Naive thymus-derived CD8-positive, alpha-beta T cell (primary cell): ENCODE measurements at regions of chr15 and their contacts with region 1.

Region 1: DNA sequence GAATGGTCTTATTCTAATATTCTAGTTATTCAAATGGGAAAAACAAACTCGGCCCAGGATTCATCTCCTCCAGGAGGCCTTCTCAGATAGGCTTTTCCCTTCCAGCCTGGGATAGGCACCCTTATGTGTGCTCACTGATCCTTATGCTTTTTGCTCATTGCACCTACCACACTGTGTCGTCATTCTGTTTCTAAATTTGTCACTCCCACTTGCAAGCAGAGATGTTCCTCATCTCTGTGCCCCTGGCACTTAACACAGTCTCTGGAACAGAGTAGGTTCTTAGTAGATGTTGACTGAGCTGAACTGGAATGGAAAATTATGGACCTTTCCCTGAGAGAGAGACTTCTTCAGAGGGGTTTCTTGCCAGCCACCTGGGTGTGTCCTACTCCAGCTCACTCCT is 18.7 kb upstream of the SPG11 start:
- DNase-seq: no peak
- ATAC-seq: no peak
- H3K4me3 Mint-ChIP-seq: peak overlapping the region; percentile 58 to 83 (median 72)
- H3K27ac Mint-ChIP-seq: peak overlapping the region; percentile 92 to 99 (median 96)
- H3K4me1 Mint-ChIP-seq: peaks cover 44 to 95% (median 93%) of the 10 kb centered on the region in 4 donors
- H3K27me3 Mint-ChIP-seq: no peaks in the 10 kb centered on the region

Region 2: GRCh38 chr15:44633603-44634002 is 48.6 kb before region 1 on chr15:
- POLR2A ChIA-PET with region 1: no interaction called
- DNase-seq: no peak
- ATAC-seq: no peak
- H3K4me3 Mint-ChIP-seq: peak overlapping the region in 2 of 10 donors; percentile 50 to 58
- H3K27ac Mint-ChIP-seq: peak overlapping the region in 4 of 10 donors; percentile 47 to 77 (median 50)
- H3K4me1 Mint-ChIP-seq: peaks cover 3 to 7% (median 6%) of the 10 kb centered on the region in 4 donors
- H3K27me3 Mint-ChIP-seq: no peaks in the 10 kb centered on the region

Region 3: GRCh38 chr15:44692659-44693058 is 10.4 kb after region 1 on chr15:
- POLR2A ChIA-PET with region 1: interaction called, 14 read pairs
- DNase-seq: no peak
- ATAC-seq: no peak
- H3K4me3 Mint-ChIP-seq: no peak overlapping the region
- H3K27ac Mint-ChIP-seq: peak overlapping the region in 5 of 10 donors; percentile 19 to 73 (median 49)
- H3K4me1 Mint-ChIP-seq: peaks cover 18 to 60% (median 51%) of the 10 kb centered on the region in 4 donors
- H3K27me3 Mint-ChIP-seq: no peaks in the 10 kb centered on the region

Region 4: DNA sequence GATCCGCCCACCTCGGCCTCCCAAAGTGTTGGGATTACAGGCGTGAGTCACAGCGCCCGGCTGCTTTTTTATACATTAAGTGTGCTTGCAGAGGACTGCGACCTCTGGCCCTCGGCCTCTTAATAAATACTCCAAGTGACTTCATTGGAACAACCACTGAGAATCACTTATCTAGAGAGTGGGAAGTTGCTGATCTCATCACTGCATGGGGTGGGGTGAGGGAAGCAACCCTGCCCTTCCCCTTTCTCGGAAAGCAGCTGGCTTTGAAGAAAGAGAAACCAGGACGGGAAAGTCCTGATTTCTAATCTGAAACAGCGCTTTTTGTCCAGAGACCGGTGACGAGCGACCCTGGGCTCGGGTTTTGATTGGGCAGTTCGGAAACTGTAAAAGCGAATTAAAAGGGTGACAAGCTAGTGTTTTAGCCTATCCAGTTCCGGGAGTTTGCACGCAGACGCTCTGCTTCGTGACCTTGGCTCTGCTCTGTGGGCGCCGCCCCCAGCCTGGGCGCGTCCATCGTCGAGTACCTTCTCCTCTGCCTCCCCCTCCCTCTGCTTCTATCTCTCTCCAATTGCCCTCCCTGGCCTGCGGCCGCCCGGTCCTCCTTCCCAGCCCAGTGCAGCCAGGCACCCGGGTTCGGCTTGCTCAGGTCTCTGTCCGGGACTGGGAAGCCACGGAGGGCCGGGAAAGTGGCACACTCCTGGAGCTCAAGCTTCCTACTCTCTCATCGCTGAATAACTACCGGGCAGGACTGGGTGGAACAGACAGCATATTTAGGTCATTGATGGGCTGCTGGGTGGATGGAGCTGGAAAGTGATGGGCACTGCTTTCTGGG is 46.6 kb after region 1 on chr15:
- POLR2A ChIA-PET with region 1: interaction called, 707 read pairs
- DNase-seq: peak; percentile 80 to 97 (median 96)
- ATAC-seq: peak; percentile 78 to 85
- H3K4me3 Mint-ChIP-seq: peak overlapping the region; percentile 97 to 100 (median 99)
- H3K27ac Mint-ChIP-seq: peak overlapping the region; percentile 98 to 100 (median 99)
- H3K4me1 Mint-ChIP-seq: peaks cover 29 to 83% (median 72%) of the 10 kb centered on the region in 4 donors
- H3K27me3 Mint-ChIP-seq: no peaks in the 10 kb centered on the region

Region 5: DNA sequence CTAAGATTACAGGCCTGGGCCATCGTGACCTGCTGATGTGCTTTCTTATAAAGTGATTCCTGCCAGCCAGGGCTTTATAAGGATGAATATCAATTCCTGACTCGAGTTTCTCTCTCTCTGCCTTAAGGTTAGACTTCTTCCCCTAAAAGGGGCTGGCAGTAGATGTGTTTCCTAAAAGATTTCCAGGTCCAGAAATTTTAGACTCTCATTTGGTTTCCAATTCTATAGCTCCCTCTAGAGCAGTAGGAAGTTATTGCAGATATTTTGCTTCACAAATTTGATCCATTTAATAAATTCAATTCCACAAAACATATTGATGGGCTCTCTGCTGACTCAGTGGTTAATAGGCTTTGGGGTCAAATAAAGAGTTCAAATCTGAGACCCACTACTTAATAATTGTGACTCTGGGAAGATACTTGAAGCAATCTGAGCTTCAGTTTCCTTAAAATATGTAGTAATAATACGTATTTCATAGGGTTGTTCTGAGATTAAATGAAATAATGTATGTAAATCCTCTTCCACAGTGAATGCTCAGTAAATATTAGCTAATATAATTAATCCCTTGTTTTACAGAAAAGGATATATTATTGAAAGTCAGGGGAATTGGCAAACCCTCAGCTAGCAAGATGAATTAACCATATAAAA is 56.3 kb after region 1 on chr15:
- POLR2A ChIA-PET with region 1: interaction called, 27 read pairs
- DNase-seq: peak in 3 of 10 donors; percentile 65 to 72 (median 67)
- ATAC-seq: no peak
- H3K4me3 Mint-ChIP-seq: peak overlapping the region in 9 of 10 donors; percentile 40 to 77 (median 59)
- H3K27ac Mint-ChIP-seq: peak overlapping the region; percentile 28 to 100 (median 87)
- H3K4me1 Mint-ChIP-seq: peaks cover 20 to 60% (median 56%) of the 10 kb centered on the region in 4 donors
- H3K27me3 Mint-ChIP-seq: no peaks in the 10 kb centered on the region